CD4-positive, alpha-beta T cell (primary cell): ENCODE measurements at regions of chr7 and their contacts with region 1.

Region 1: GRCh38 chr7:100407285-100408180 is 21.0 kb downstream of the ZCWPW1 start:
- DNase-seq: peak in 9 of 14 experiments; percentile 11 to 81 (median 31)
- ATAC-seq: peak; percentile 93
- H3K4me3 ChIP-seq: no peak overlapping the region
- H3K4me3 Mint-ChIP-seq: no peak overlapping the region
- H3K27ac ChIP-seq: no peak overlapping the region
- H3K27ac Mint-ChIP-seq: no peak overlapping the region
- H3K4me1 ChIP-seq: peaks cover 5% of the 10 kb centered on the region
- H3K4me1 Mint-ChIP-seq: peaks cover 3% of the 10 kb centered on the region
- H3K27me3 ChIP-seq: no peaks in the 10 kb centered on the region
- H3K27me3 Mint-ChIP-seq: no peaks in the 10 kb centered on the region
- CTCF ChIP-seq: peak; percentile 67

Region 2: DNA sequence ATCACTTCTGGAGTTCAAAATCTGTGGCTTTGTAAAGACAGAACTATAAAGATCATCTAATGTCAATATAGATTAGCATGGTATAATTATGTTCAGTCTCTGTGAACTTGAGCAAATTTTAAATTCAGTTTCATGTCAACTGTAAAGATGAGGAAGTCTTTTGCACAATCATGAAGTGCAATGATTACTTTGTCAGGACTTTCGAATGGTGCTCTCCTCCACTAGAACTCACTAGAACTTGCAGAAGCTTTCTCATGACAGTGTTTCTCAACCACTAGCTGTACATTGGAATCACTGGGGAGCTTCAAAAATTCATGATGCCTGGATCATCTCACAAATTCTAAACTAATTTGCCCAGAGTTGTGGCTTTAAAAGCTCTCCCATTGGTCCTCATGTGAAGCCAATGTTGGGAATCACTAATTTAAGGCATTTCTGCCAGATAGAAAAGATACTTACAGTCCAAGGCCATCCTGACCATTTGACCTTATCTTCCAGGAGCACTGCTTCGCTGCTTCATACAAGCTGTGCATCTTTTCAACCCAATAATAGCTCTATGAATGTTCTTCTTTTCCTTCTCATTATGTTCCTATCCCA is 543.6 kb before region 1 on chr7:
- CTCF ChIA-PET with region 1: no interaction called
- POLR2A ChIA-PET with region 1: no interaction called
- intact Hi-C with region 1: no loop called
- DNase-seq: no peak
- ATAC-seq: no peak
- H3K4me3 ChIP-seq: no peak overlapping the region
- H3K4me3 Mint-ChIP-seq: no peak overlapping the region
- H3K27ac ChIP-seq: no peak overlapping the region
- H3K27ac Mint-ChIP-seq: no peak overlapping the region
- H3K4me1 ChIP-seq: no peaks in the 10 kb centered on the region
- H3K4me1 Mint-ChIP-seq: no peaks in the 10 kb centered on the region
- H3K27me3 ChIP-seq: peaks cover 0 to 13% of the 10 kb centered on the region in 2 experiments
- H3K27me3 Mint-ChIP-seq: peaks cover 28% of the 10 kb centered on the region
- CTCF ChIP-seq: no peak

Region 3: DNA sequence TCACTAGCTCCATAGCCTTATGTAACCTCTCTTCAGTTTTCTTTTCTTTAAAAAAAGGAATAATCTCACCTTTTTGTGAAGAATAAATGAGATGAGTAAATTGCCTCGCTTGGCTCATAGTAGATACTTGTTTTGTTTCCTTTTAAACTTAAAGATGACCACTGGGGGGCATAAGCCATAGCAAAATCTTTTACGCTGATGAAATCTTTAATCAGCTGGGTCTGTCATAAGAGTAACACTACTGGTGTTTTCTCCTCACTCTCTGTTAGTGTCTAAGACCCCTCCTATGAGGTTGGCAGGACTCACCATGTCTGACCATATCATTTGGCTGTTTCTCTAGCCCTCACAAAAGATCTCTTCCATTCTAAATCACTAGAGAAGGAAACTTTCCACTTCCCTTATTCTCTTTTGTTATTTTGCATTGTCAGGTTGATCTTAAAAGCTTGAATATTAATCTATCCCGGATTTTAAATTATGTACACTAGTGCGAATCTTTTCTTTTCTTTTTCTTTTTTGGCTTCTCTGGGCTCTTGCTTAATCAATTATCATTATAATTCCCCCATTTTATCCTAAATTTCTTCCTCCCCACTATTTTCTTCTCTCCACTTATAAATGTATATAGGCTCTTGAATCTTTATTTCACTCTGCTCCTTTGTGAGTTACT is 217.4 kb before region 1 on chr7:
- CTCF ChIA-PET with region 1: interaction called, 4 read pairs
- POLR2A ChIA-PET with region 1: no interaction called
- intact Hi-C with region 1: loop called in 1 of 2 experiments (anchors 5 kb)
- DNase-seq: peak in 3 of 14 experiments; percentile 72 to 77 (median 73)
- ATAC-seq: peak; percentile 84
- H3K4me3 ChIP-seq: no peak overlapping the region
- H3K4me3 Mint-ChIP-seq: no peak overlapping the region
- H3K27ac ChIP-seq: no peak overlapping the region
- H3K27ac Mint-ChIP-seq: peak overlapping the region; percentile 25
- H3K4me1 ChIP-seq: peaks cover 1% of the 10 kb centered on the region
- H3K4me1 Mint-ChIP-seq: peaks cover 44% of the 10 kb centered on the region
- H3K27me3 ChIP-seq: no peaks in the 10 kb centered on the region
- H3K27me3 Mint-ChIP-seq: no peaks in the 10 kb centered on the region
- CTCF ChIP-seq: peak; percentile 55